ENCODE measurements at regions of chr1 and their contacts with region 1.

Region 1: DNA sequence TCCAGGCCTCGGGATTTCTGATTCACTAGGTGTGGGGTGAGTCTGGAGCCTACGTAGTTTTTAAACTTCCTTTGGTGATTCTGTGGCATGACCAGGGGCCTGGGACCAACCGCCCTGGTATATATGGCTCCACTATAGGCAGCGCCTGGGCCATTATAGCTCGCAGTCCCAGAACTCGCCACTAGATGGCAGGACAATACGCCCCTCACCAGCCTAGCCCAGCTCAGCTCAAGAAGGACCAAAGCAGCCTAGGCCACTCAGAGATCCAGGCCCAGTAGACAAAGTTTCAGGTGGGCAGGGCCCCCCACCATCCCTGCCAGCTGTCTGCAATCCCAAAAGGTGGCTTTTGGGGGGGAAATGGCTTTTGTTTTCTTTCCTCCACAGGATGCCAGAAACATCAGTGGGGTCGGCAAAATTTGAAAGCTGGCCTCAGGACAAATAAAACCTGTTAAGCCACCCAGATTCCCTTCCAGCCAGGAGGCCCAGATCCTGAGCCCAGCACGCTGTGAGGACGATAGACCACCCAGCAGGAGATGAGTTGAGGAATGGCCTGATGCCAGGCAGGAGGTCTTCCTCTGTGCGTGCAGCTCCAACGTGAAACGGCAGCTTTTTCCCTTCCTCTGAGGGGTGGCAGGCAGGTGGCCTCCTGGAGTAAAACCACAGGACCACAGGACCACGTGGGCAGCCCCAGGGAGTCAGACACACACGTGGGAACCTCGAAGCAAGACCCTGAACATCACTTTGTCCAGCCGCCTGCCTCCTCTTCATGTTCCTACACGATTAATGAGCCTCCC is 24.8 kb upstream of the TMEM51 start:
- DNase-seq: peak; percentile 74
- H3K4me3 Mint-ChIP-seq: no peak overlapping the region
- H3K27ac Mint-ChIP-seq: no peak overlapping the region
- H3K4me1 Mint-ChIP-seq: no peaks in the 10 kb centered on the region
- H3K27me3 Mint-ChIP-seq: peaks cover 1% of the 10 kb centered on the region
- CTCF ChIP-seq: peak; percentile 86

Region 2: DNA sequence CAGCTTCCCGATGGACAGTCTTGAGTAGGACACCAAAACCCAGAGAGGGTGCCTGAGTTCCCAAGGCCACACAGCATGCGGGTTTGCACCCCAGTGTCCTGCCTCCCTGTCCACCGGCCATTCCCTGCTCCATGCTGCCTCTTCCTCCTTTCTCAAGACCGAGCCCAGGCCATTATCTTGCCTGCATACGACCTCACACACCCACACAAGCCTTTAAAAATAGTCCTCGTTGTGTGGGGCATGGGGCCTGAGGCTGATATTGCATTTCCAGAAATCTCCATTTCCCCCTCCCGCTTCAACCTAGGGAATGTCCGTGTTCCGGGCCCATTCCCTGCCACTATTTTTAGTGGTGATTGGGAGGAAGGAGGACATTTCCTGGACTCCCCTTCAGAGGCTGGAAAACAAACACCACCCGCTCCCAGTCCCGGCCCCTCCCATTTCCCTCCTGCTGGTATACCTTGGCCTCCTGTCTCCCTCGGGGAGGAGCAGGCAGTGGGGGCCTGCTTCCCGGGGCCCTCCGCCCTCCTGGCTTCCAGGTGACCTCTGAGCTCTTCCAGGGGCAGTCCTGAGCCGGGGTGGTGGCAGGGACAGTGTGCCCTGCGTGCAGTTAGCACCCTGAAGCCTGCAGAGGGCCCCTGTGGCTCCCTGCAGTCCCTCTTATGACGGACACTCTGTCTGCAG is 107.5 kb before region 1 on chr1:
- CTCF ChIA-PET with region 1: no interaction called
- POLR2A ChIA-PET with region 1: no interaction called
- intact Hi-C with region 1: no loop called
- DNase-seq: no peak
- H3K4me3 Mint-ChIP-seq: no peak overlapping the region
- H3K27ac Mint-ChIP-seq: no peak overlapping the region
- H3K4me1 Mint-ChIP-seq: no peaks in the 10 kb centered on the region
- H3K27me3 Mint-ChIP-seq: no peaks in the 10 kb centered on the region
- CTCF ChIP-seq: no peak

Region 3: GRCh38 chr1:15283526-15283925 is 154.8 kb after region 1 on chr1:
- CTCF ChIA-PET with region 1: interaction called, 25 read pairs
- POLR2A ChIA-PET with region 1: interaction called, 3 read pairs
- intact Hi-C with region 1: no loop called
- DNase-seq: peak; percentile 87
- H3K4me3 Mint-ChIP-seq: no peak overlapping the region
- H3K27ac Mint-ChIP-seq: no peak overlapping the region
- H3K4me1 Mint-ChIP-seq: peaks cover 21% of the 10 kb centered on the region
- H3K27me3 Mint-ChIP-seq: no peaks in the 10 kb centered on the region
- CTCF ChIP-seq: peak; percentile 35

Region 4: GRCh38 chr1:15299806-15300205 is 171.1 kb after region 1 on chr1:
- CTCF ChIA-PET with region 1: interaction called, 92 read pairs
- POLR2A ChIA-PET with region 1: interaction called, 4 read pairs
- intact Hi-C with region 1: loop called (anchors 1 kb)
- DNase-seq: no peak
- H3K4me3 Mint-ChIP-seq: no peak overlapping the region
- H3K27ac Mint-ChIP-seq: no peak overlapping the region
- H3K4me1 Mint-ChIP-seq: no peaks in the 10 kb centered on the region
- H3K27me3 Mint-ChIP-seq: no peaks in the 10 kb centered on the region
- CTCF ChIP-seq: no peak

Region 5: DNA sequence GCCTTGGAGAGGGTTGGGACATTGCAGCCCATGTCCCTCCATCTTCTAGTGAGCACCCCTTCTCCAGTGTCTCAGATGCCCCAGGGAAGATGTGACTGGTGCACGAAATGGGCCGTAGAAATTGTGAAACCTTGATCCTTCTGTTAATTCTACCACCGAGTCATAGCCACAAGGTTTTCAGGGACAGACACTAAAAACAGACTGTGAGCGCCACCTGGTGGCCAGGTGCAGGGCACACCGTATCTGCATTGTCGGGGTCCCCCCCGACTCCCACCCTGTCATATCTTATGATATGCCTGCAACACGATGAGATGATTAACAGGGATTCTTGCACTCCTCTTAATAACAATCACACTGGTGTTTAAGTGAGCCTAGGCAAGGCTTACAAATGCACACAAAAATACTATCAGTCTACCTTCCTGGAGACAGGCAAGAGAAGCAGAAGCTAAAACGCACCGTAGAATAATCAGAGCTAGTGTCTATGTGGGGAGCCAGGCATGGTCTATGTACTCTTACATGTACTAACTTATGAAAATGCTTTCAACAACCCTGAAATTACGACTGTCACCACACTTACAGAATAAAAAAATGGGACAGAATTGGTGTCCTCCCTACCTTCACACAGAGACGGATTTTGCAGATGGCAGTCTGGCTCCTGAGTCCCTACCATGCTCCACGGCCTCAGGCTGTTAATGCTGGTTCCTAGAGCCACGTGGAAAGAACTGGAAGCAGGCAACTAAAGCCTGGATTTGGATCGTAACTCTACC is 176.2 kb after region 1 on chr1:
- CTCF ChIA-PET with region 1: interaction called, 92 read pairs
- POLR2A ChIA-PET with region 1: interaction called, 4 read pairs
- intact Hi-C with region 1: loop called (anchors 1 kb)
- DNase-seq: peak; percentile 69
- H3K4me3 Mint-ChIP-seq: no peak overlapping the region
- H3K27ac Mint-ChIP-seq: no peak overlapping the region
- H3K4me1 Mint-ChIP-seq: no peaks in the 10 kb centered on the region
- H3K27me3 Mint-ChIP-seq: no peaks in the 10 kb centered on the region
- CTCF ChIP-seq: peak; percentile 84